ENCODE measurements at regions of chr1 and their contacts with region 1.

Region 1: DNA sequence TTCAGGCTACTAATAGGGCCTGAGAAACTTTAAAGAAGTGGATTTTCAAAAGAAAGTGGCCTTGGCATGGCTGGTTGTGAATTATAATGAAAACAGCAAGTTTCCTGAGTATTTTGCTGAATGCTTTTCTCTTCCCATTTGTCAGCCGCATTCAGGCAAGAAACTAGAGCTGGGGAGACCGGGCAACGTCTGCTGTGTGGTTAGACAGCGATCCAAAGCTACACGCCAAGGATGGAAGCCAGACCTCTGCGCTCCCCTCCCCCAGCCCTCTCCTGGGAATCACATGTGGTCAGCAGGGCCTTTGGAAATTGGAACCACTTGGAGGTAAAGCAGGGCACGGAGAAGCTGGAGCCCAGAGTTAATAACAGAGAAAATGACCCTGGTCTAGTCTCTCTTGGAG is 114.1 kb upstream of the CD34 start:
- DNase-seq: no peak
- ATAC-seq: no peak
- H3K4me3 Mint-ChIP-seq: no peak overlapping the region
- H3K27ac Mint-ChIP-seq: no peak overlapping the region
- H3K4me1 Mint-ChIP-seq: no peaks in the 10 kb centered on the region
- H3K27me3 Mint-ChIP-seq: no peaks in the 10 kb centered on the region

Region 2: GRCh38 chr1:207968521-207969009 is 56.5 kb before region 1 on chr1:
- CTCF ChIA-PET with region 1: no interaction called
- POLR2A ChIA-PET with region 1: no interaction called
- intact Hi-C with region 1: no loop called
- DNase-seq: no peak
- ATAC-seq: no peak
- H3K4me3 Mint-ChIP-seq: no peak overlapping the region
- H3K27ac Mint-ChIP-seq: no peak overlapping the region
- H3K4me1 Mint-ChIP-seq: peaks cover 2% of the 10 kb centered on the region
- H3K27me3 Mint-ChIP-seq: peaks cover 5% of the 10 kb centered on the region

Region 3: DNA sequence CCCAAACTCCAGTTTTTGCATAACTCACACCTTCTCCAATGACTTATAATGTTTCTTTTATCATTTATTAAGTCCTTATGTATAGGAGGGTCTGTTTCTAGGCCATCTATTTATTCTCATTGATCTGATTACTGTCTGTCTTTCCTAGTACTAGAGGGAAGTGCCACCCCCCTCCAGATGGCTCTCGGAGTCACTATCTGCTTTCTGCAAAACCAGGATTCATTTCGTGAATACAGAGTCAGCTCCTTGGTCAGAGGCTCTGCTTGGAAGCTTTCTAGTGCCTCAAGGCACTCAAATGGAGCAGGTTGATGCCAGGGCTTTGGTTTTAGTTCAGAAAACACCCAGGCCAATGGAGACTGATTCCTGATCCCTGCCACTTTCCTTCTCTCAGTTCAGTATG is 11.8 kb before region 1 on chr1:
- CTCF ChIA-PET with region 1: interaction called, 11 read pairs
- POLR2A ChIA-PET with region 1: no interaction called
- intact Hi-C with region 1: no loop called
- DNase-seq: no peak
- ATAC-seq: no peak
- H3K4me3 Mint-ChIP-seq: no peak overlapping the region
- H3K27ac Mint-ChIP-seq: no peak overlapping the region
- H3K4me1 Mint-ChIP-seq: no peaks in the 10 kb centered on the region
- H3K27me3 Mint-ChIP-seq: no peaks in the 10 kb centered on the region

Region 4: DNA sequence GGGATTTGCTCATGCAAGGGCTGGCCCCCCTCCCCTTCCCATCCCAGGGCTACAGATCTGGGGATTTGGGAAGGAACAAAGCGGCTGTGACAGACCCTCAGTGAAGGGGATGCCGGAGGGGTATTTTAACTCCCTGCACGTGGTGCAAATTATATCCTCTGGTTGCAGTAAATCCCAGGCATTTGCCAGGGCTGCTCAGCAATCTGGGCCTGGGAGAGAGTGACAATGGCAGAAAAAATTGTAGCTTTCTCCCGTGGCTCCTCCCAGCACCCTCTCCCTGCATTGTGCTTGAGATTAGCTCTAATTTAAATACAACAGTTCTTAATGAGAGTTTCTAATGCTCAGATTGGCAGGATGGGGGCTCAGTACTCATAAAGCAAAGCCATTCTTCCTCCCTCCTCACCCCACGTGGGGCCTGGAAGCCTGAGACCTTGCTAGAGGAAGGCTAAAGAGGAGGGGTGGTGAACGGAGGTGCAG is 15.8 kb after region 1 on chr1:
- CTCF ChIA-PET with region 1: interaction called, 11 read pairs
- POLR2A ChIA-PET with region 1: no interaction called
- intact Hi-C with region 1: no loop called
- DNase-seq: no peak
- ATAC-seq: no peak
- H3K4me3 Mint-ChIP-seq: no peak overlapping the region
- H3K27ac Mint-ChIP-seq: no peak overlapping the region
- H3K4me1 Mint-ChIP-seq: peaks cover 5% of the 10 kb centered on the region
- H3K27me3 Mint-ChIP-seq: no peaks in the 10 kb centered on the region

Region 5: DNA sequence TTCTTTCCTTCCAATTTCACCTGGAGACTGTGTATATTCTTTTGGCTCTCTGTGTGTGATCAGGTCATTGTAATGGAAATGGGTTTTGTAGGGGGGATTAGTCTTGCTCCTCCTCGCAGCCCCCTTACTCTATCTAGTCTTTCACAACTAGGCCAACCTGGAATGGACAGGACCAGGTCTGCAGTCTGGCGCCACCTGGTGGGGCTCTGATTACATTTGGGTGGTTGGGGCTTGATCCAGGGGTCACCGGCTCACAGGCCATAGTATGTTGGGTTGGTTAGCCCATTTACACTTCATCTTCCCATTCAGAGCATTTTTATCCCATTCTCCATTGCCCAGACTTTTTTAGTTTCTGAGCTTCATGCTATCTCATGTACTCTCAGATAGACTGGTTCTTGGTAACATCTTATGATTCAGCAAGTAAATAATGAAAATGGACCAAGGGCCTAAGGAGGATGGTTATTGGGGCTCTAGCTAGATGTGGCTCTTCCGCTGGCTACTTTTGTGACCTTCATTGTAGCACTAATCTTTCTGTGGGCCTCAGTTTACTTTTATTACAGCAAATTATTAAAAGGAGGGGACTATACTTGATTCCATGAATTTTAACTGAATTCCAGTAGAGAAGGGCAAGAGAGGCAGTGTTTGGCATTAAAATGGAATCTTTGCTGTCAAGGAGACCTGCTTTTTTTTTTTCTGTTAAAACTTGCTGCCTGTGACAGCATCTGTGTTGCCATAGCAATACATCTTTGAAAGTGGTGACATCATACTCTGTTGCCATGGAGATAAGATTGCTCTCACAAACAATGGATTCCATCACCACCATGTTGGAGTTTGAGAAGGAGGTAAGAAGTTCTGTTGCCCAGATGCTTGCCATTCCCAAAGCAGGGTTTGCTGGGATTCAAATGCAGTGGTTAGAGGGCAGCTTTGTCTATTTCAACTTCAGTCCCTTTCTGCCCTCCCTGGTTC is 69.0 kb after region 1 on chr1:
- CTCF ChIA-PET with region 1: interaction called, 61 read pairs
- POLR2A ChIA-PET with region 1: no interaction called
- intact Hi-C with region 1: loop called (anchors 1 kb)
- DNase-seq: peak; percentile 83
- ATAC-seq: peak; percentile 64
- H3K4me3 Mint-ChIP-seq: no peak overlapping the region
- H3K27ac Mint-ChIP-seq: no peak overlapping the region
- H3K4me1 Mint-ChIP-seq: no peaks in the 10 kb centered on the region
- H3K27me3 Mint-ChIP-seq: no peaks in the 10 kb centered on the region

Region 6: GRCh38 chr1:208238710-208239472 is 213.9 kb after region 1 on chr1:
- CTCF ChIA-PET with region 1: interaction called, 51 read pairs
- POLR2A ChIA-PET with region 1: no interaction called
- intact Hi-C with region 1: no loop called
- DNase-seq: peak; percentile 20
- ATAC-seq: peak; percentile 49
- H3K4me3 Mint-ChIP-seq: no peak overlapping the region
- H3K27ac Mint-ChIP-seq: no peak overlapping the region
- H3K4me1 Mint-ChIP-seq: peaks cover 12% of the 10 kb centered on the region
- H3K27me3 Mint-ChIP-seq: peaks cover 43% of the 10 kb centered on the region

Region 7: GRCh38 chr1:208245185-208245705 is 220.2 kb after region 1 on chr1:
- CTCF ChIA-PET with region 1: interaction called, 51 read pairs
- POLR2A ChIA-PET with region 1: no interaction called
- intact Hi-C with region 1: loop called (anchors 1 kb)
- DNase-seq: peak; percentile 88
- ATAC-seq: peak; percentile 75
- H3K4me3 Mint-ChIP-seq: peak overlapping the region; percentile 44
- H3K27ac Mint-ChIP-seq: no peak overlapping the region
- H3K4me1 Mint-ChIP-seq: peaks cover 12% of the 10 kb centered on the region
- H3K27me3 Mint-ChIP-seq: peaks cover 21% of the 10 kb centered on the region

Region 8: GRCh38 chr1:209248649-209249279 is 1223.7 kb after region 1 on chr1:
- CTCF ChIA-PET with region 1: interaction called, 3 read pairs
- POLR2A ChIA-PET with region 1: no interaction called
- intact Hi-C with region 1: loop called in 1 of 2 experiments (anchors 5 kb)
- DNase-seq: peak; percentile 64
- ATAC-seq: peak; percentile 63
- H3K4me3 Mint-ChIP-seq: no peak overlapping the region
- H3K27ac Mint-ChIP-seq: no peak overlapping the region
- H3K4me1 Mint-ChIP-seq: no peaks in the 10 kb centered on the region
- H3K27me3 Mint-ChIP-seq: no peaks in the 10 kb centered on the region